Activated CD4-positive, alpha-beta T cell treated with anti-CD3 and anti-CD28 coated beads, Interleukin-2, amount 10 ng/mL, durations not matched to agents 24 days and 14 days (primary cell): ENCODE measurements at regions of chr12 and their contacts with region 1.

Region 1: DNA sequence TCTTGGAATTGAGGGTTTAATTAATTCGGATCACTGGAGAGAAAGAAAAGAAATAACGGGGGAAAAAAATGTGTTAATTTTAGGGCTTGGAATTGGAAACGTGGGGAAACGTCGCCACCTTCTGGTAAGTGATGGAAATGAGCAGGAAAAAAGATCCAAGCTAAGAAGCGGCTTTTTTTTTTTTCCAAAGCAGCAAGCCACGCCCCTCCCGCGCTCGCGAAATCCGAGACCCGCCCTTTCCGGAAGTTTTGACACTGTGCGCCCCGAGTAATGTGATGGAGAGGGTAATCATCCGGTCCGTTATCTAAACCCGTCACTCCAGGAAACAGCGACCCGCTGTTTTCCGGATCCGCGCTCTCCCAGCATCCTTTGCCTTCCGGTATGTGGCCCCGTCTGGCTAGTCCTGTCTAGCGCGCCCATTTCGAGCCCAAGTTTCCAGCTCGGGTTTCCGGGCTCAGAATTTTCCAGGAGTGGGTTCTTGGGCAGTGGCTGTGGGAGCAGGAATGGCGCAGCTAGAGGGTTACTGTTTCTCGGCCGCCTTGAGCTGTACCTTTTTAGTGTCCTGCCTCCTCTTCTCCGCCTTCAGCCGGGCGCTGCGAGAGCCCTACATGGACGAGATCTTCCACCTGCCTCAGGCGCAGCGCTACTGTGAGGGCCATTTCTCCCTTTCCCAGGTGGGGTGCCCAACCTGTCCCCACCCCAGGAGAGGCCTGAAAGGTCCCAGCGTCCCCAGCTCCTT is at the start of gene ALG10B:
- DNase-seq: peak; percentile 98
- H3K4me3 Mint-ChIP-seq: peak within 1 kb of the TSS; percentile 98
- H3K27ac Mint-ChIP-seq: peak within 1 kb of the TSS; percentile 96
- H3K4me1 Mint-ChIP-seq: peaks cover 13% of the 10 kb centered on the region
- H3K27me3 Mint-ChIP-seq: no peaks in the 10 kb centered on the region
- total RNA-seq, gene ALG10B: 15.1 and 16.0 TPM in 2 replicates

Region 2: DNA sequence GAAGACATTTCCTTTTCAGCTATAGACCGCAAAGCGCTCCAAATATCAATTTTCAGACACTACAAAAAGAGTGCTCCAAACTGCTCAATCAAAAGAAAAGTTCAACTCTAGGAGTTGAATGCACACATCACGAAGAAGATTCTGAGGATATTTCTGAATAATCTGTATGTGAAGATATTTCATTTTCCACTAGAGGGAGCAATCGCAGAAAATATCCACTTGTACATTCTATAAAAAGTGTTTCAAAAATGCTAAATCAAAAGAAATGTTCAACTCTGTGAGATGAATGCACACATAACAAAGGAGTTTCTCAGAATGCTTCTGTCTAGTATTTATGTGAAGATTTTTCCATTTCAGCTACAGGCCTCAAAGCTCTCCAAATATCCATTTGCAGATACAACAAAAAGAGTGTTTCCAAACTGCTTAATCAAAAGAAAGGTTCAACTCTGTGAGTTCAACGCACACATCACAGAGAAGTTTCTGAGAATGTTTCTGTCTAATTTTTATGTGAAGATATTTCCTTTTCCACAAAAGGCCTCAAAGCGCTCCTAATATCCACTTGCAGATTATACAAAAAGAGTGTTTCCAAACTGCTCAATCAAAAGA is 643.8 kb before region 1 on chr12:
- intact Hi-C with region 1: loop called (anchors 10 kb)
- DNase-seq: no peak
- H3K4me3 Mint-ChIP-seq: no peak overlapping the region
- H3K27ac Mint-ChIP-seq: no peak overlapping the region
- H3K4me1 Mint-ChIP-seq: no peaks in the 10 kb centered on the region
- H3K27me3 Mint-ChIP-seq: no peaks in the 10 kb centered on the region

Region 3: GRCh38 chr12:38138225-38139221 is 178.0 kb before region 1 on chr12:
- intact Hi-C with region 1: loop called (anchors 1 kb)
- DNase-seq: peak; percentile 89
- H3K4me3 Mint-ChIP-seq: peak overlapping the region; percentile 87
- H3K27ac Mint-ChIP-seq: peak overlapping the region; percentile 39
- H3K4me1 Mint-ChIP-seq: peaks cover 10% of the 10 kb centered on the region
- H3K27me3 Mint-ChIP-seq: no peaks in the 10 kb centered on the region

Region 4: GRCh38 chr12:38289396-38289795 is 27.2 kb before region 1 on chr12:
- intact Hi-C with region 1: no loop called
- DNase-seq: no peak
- H3K4me3 Mint-ChIP-seq: no peak overlapping the region
- H3K27ac Mint-ChIP-seq: no peak overlapping the region
- H3K4me1 Mint-ChIP-seq: no peaks in the 10 kb centered on the region
- H3K27me3 Mint-ChIP-seq: no peaks in the 10 kb centered on the region

Region 5: DNA sequence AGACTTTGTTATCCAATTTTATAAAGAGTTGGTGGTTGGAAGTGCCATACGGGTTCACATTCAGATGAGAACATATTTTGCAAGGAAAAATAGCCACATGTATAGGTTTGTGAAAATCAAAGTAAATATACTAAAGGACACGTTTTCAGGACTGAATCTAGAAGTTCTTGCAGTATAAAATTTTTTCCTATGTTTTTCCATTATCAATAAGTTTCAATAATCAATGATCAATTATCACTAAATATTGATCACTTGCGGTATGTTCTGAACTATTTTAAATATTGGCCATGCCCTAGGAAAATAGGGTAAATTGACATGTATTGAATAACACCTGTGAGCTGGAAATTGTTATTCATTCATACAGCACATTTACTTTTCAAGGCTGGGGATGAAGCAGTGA is 25.9 kb after region 1 on chr12:
- intact Hi-C with region 1: no loop called
- DNase-seq: no peak
- H3K4me3 Mint-ChIP-seq: no peak overlapping the region
- H3K27ac Mint-ChIP-seq: no peak overlapping the region
- H3K4me1 Mint-ChIP-seq: no peaks in the 10 kb centered on the region
- H3K27me3 Mint-ChIP-seq: no peaks in the 10 kb centered on the region

Region 6: GRCh38 chr12:38744041-38744440 is 427.5 kb after region 1 on chr12:
- intact Hi-C with region 1: no loop called
- DNase-seq: no peak
- H3K4me3 Mint-ChIP-seq: no peak overlapping the region
- H3K27ac Mint-ChIP-seq: no peak overlapping the region
- H3K4me1 Mint-ChIP-seq: no peaks in the 10 kb centered on the region
- H3K27me3 Mint-ChIP-seq: no peaks in the 10 kb centered on the region